ENCODE measurements at regions of chr17 and their contacts with region 1.

Region 1: DNA sequence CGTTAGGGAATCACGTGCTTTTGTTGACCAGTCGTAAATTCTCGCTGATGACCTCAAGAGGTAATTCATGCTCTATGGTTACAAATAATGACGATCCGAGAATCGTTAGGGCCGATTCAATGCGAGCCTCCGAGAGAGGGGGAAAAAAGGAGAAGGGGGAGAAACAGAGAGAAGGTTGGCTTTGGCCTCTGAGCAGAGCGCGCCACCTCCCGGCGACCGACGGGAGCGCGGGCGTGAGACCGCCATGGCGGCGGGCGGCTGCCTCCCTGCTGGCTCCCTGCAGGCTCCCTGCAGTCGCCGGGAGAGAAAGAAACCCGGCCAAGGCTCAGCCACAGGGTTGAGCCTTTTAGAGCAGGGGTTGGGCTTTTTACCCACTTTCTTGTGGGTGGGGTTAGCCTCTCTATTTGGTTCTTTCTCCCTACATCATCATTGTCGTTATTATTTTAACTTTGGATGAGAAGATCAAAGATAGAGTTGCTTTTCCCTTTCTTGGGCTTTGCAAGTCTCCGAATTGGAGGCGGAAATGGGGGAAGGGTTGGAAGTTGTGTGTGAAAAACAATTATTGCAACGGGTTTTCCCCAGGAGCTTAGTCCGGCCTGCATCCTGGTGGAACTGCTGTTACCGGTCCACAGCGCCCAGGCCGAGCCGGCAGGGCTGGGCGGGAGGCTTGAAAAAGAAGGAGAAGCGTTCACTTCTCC is 410 bp upstream of the HOXB5 start:
- DNase-seq: no peak
- H3K4me3 ChIP-seq: peak overlapping the region; percentile 25 to 71 (median 42)
- H3K27ac ChIP-seq: peak overlapping the region in 3 of 4 donors; percentile 17 to 69 (median 49)
- H3K4me1 ChIP-seq: peaks cover 19 to 57% (median 45%) of the 10 kb centered on the region in 3 donors
- H3K27me3 ChIP-seq: peaks cover 0 to 100% (median 46%) of the 10 kb centered on the region in 4 donors
- CTCF ChIP-seq: peak; percentile 82 to 95 (median 92)
- POLR2A ChIP-seq: no peak

Region 2: DNA sequence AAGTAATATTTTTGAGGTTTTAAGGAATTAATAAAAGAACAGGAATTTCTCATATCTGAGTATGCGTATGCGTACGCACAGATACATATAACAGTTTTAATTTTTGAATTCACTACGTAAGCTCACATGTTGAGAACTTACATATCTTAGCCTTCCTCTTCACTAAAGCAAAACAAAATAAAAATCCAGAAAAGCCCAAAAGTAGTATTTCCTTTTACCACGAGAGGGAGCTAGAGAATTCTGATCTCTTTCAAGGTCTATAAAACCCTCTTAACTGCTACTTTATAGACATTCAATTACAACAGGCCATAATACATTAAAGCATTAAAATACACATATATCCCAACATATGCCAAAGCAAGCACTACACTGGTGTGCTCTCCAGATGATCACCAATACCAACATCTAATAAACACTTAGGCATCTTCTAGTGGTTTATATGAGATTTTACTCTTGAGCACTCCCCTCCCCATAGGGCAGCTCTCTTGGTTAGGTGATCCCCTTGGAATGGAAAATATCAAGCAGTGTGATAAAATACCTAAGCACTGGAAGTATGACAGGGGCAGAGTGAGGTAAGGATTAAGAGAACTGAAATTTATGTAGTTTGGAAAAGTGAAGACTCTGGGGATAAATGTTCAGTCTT is 258.0 kb before region 1 on chr17:
- intact Hi-C with region 1: loop called (anchors 5 kb)
- DNase-seq: no peak
- H3K4me3 ChIP-seq: no peak overlapping the region
- H3K27ac ChIP-seq: no peak overlapping the region
- H3K4me1 ChIP-seq: no peaks in the 10 kb centered on the region
- H3K27me3 ChIP-seq: peaks cover 0 to 100% (median 10%) of the 10 kb centered on the region in 4 donors
- CTCF ChIP-seq: peak; percentile 44 to 77 (median 72)
- POLR2A ChIP-seq: no peak

Region 3: GRCh38 chr17:48347177-48347576 is 246.8 kb before region 1 on chr17:
- intact Hi-C with region 1: loop called (anchors 5 kb)
- DNase-seq: no peak
- H3K4me3 ChIP-seq: no peak overlapping the region
- H3K27ac ChIP-seq: no peak overlapping the region
- H3K4me1 ChIP-seq: no peaks in the 10 kb centered on the region
- H3K27me3 ChIP-seq: peaks cover 0 to 68% (median 2%) of the 10 kb centered on the region in 4 donors
- CTCF ChIP-seq: no peak
- POLR2A ChIP-seq: no peak